ENCODE measurements at regions of chr1 and their contacts with region 1.

Region 1: DNA sequence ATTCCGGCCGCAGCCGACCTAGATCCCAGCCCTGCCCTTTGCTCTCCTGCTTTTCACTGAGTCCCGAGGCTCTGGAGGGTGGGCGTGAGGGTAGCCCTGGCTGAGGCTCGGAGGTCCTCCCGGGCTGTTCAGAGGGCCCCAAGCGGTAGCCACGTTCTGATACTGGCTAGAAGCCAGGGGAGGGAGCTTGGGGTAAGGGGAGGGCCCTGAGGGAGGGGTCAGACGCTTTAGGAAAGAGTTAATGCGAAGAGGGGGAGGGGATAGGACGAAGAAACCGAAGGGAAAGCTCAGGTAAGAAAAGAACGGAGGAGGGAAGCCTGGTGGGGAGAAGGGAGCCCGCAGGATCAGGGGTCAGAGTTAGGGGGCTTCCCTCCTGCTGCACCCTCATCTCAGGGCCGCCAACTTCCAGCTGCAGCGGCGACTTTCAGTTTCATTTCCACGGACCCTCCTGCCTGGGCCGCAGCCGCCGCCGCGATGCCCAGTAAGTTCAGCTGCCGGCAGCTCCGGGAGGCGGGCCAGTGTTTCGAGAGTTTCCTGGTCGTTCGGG is at the start of gene MOV10:
- DNase-seq: peak; percentile 63
- H3K4me3 ChIP-seq: peak within 1 kb of the TSS; percentile 82
- H3K27ac ChIP-seq: peak within 1 kb of the TSS; percentile 28
- H3K4me1 ChIP-seq: peaks cover 32% of the 10 kb centered on the region
- CTCF ChIP-seq: no peak
- total RNA-seq, gene MOV10: 24.4 and 28.2 TPM in 2 replicates

Region 2: DNA sequence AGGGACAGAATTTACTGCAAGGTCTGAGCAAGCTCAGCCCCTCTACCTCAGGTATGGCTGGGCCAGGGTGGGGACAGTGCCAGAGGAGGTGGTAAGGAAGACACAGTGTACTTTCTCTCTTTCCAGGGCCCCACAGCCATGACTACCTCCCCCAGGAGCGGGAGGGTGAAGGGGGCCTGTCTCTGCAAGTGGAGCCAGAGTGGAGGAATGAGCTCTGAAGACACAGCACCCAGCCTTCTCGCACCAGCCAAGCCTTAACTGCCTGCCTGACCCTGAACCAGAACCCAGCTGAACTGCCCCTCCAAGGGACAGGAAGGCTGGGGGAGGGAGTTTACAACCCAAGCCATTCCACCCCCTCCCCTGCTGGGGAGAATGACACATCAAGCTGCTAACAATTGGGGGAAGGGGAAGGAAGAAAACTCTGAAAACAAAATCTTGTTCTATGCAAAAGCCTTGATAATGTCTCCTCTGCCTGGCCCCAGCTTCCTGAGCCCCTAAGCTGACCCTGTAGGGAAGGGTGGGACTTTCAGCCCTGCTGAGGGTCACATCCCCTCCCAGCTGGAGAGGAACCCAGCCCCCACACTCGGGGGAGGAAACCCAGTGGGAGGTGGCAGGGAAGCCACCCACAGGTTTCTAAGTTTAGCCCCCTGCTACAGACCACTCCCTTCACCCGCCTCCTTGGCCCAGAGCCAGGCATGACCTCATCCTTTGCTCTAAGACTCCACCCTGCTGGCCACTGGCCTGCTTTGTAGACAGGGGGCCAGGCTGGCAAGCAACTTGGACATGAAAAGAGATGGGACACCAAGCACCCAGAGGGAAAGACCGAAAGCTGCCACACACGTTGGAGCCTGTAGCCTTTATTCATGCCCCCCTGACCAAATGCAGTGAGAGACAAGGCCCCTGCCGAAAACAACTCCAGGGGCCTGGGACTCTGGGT is 26.0 kb after region 1 on chr1:
- CTCF ChIA-PET with region 1: interaction called, 5 read pairs
- POLR2A ChIA-PET with region 1: interaction called, 3 read pairs
- intact Hi-C with region 1: loop called (anchors 2 kb)
- DNase-seq: peak; percentile 84
- H3K4me3 ChIP-seq: peak overlapping the region; percentile 40
- H3K27ac ChIP-seq: peak overlapping the region; percentile 54
- H3K4me1 ChIP-seq: peaks cover 55% of the 10 kb centered on the region
- CTCF ChIP-seq: no peak